Activated B cell treated with CpG ODN at 0.5 μM for 24 hours (primary cell): ENCODE measurements at regions of chr3 and their contacts with region 1.

Region 1: GRCh38 chr3:48811524-48811923 is 36.1 kb downstream of the PRKAR2A start:
- DNase-seq: no peak
- ATAC-seq: no peak
- H3K4me3 Mint-ChIP-seq: no peak overlapping the region
- H3K27ac Mint-ChIP-seq: no peak overlapping the region
- H3K4me1 Mint-ChIP-seq: peaks cover 27% of the 10 kb centered on the region
- H3K27me3 Mint-ChIP-seq: no peaks in the 10 kb centered on the region
- CTCF ChIP-seq: no peak

Region 2: DNA sequence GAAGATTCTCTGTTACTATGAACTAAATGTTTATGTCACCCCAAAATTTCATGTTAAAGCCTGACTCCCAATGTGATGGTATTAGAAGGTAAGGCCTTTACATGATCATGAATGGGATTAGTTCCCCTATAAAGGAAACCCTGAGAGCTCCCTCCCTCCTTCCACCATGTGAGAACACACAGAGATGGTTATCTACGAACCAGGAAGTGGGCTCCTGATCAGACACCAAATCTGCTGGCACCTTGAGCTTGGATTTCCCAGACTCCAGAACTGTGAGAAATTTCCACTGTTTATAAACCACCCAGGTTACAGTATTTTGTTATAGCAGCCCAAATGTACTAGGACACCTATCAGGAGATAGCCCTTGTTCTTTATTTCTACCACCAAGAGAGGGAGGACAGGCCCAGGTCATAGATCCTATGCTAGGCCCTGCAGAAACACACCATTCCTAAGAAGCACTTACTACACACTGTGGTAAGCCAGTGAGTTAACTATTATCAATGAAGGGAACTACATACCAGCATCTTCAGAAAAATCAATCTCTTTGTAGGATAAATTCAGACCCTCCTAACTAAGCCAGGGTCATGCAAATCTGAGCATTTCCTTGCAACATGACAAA is 22.9 kb before region 1 on chr3:
- CTCF ChIA-PET with region 1: no interaction called
- POLR2A ChIA-PET with region 1: interaction called, 11 read pairs
- intact Hi-C with region 1: no loop called
- DNase-seq: no peak
- ATAC-seq: no peak
- H3K4me3 Mint-ChIP-seq: no peak overlapping the region
- H3K27ac Mint-ChIP-seq: no peak overlapping the region
- H3K4me1 Mint-ChIP-seq: no peaks in the 10 kb centered on the region
- H3K27me3 Mint-ChIP-seq: no peaks in the 10 kb centered on the region
- CTCF ChIP-seq: no peak

Region 3: DNA sequence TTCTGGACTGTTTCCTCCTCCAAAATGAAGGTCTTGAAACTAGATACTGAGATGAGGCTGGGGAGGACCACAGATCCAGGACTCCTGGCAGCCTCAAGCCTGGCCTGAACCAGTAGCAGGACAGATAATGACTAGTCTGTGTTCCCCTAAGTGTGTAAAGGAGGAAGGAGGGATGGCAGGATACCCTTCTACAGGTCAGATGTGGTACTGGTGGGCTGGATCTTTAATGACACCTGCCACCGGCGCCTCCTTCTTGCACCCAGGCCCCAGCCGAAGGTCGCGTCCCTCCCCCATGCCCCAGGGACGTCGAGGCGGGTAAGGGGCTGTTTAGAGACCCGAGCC is 308.5 kb after region 1 on chr3:
- CTCF ChIA-PET with region 1: no interaction called
- POLR2A ChIA-PET with region 1: no interaction called
- intact Hi-C with region 1: no loop called
- DNase-seq: no peak
- ATAC-seq: no peak
- H3K4me3 Mint-ChIP-seq: peak overlapping the region; percentile 84
- H3K27ac Mint-ChIP-seq: peak overlapping the region; percentile 79
- H3K4me1 Mint-ChIP-seq: peaks cover 17% of the 10 kb centered on the region
- H3K27me3 Mint-ChIP-seq: no peaks in the 10 kb centered on the region
- CTCF ChIP-seq: no peak